ENCODE measurements at regions of chr7 and their contacts with region 1.

Region 1: GRCh38 chr7:151057989-151058780 is 488 bp upstream of the CDK5 start:
- DNase-seq: peak; percentile 98
- ATAC-seq: peak; percentile 80
- H3K4me3 ChIP-seq: peak overlapping the region; percentile 86
- H3K27ac ChIP-seq: peak overlapping the region; percentile 67
- H3K4me1 ChIP-seq: peaks cover 45% of the 10 kb centered on the region
- H3K27me3 ChIP-seq: no peaks in the 10 kb centered on the region
- CTCF ChIP-seq: no peak

Region 2: GRCh38 chr7:150903606-150904005 is 154.6 kb before region 1 on chr7:
- CTCF ChIA-PET with region 1: no interaction called
- POLR2A ChIA-PET with region 1: no interaction called
- intact Hi-C with region 1: no loop called
- DNase-seq: peak; percentile 87
- ATAC-seq: peak; percentile 90
- H3K4me3 ChIP-seq: no peak overlapping the region; the same call in 1 of the 2 replicates
- H3K27ac ChIP-seq: peak overlapping the region; percentile 41
- H3K4me1 ChIP-seq: peaks cover 27% of the 10 kb centered on the region
- H3K27me3 ChIP-seq: peaks cover 4% of the 10 kb centered on the region; the same call in 1 of the 2 replicates
- CTCF ChIP-seq: no peak

Region 3: DNA sequence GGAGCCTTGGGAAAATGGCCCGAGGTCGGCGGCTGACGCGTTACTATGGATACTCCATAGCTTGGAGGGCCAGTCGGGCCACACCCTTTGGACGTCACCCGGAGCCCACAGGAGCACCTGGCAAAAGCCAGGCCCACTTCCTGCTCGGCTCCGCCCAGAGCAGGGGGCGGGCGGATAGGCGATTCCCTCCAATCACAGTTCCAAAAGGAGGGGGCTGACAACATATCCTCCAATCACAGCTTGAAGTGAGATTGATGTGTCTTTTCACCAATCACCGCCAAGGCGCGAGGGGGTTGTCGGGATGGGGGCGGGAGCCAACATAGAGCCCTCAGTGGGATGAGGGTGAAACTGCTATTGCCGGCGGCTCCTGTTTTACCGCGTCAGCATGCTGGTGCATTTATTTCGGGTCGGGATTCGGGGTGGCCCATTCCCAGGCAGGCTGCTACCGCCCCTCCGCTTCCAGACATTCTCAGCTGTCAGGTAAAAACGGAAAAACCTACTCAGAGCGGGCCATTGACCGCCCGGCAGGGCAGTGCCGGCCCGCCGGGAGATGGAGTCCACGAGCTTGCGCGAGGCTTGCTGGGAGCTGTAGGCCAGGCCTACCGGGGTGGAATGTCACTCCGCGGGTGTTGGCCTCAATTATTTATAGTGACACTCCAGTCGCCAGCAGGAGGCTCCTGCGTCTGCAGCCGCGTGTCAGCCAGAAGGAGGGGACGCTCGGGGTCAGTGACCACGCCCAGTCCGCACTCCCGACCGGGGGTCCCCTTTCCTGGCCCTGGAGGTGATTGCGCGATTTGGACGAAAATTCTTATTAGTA is 29.8 kb before region 1 on chr7 and contains the start of gene ABCB8:
- CTCF ChIA-PET with region 1: interaction called, 5 read pairs
- POLR2A ChIA-PET with region 1: no interaction called
- intact Hi-C with region 1: loop called (anchors 1 kb)
- DNase-seq: peak; percentile 99
- ATAC-seq: peak; percentile 87
- H3K4me3 ChIP-seq: peak within 1 kb of the TSS; percentile 75
- H3K27ac ChIP-seq: peak within 1 kb of the TSS; percentile 81
- H3K4me1 ChIP-seq: peaks cover 44% of the 10 kb centered on the region
- H3K27me3 ChIP-seq: no peaks in the 10 kb centered on the region
- CTCF ChIP-seq: peak; percentile 60
- total RNA-seq, gene ABCB8: 58.4 and 95.7 TPM in 2 replicates

Region 4: DNA sequence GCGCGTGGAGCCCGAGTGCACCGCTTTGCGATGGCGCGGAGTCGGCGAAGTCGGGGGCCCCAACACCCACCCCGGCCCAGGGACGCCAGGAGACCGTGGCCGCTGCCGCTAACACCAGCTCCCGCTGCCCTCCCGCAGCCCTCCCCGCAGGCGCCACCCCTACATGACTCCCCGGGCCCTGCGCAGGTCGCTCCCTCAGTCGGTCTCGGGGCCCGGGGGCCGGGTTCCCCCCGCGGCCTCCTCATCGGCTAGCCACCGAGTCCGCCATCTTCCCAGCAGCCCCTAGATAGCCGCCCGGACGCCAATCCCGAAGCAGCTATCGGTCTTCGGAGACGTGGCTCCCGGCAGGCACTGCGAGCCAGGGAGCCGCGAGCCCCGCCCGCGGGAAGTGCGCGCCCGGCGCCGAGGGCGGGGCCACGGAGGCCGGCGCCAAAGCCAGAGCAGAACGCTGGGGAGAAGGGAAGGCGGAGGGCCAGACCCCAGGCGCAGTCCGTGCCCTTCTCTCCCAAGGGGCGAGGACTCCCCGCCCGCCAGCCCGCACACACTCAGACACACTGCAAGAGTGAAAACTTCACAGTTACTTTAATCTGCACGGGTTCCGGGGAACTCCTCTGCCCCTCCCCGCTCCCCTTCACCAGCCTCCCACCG is 22.5 kb after region 1 on chr7 and contains the start of gene FASTK:
- CTCF ChIA-PET with region 1: no interaction called
- POLR2A ChIA-PET with region 1: interaction called, 23 read pairs
- intact Hi-C with region 1: loop called (anchors 1 kb)
- DNase-seq: peak; percentile 94
- ATAC-seq: peak; percentile 62
- H3K4me3 ChIP-seq: peak within 1 kb of the TSS; percentile 91
- H3K27ac ChIP-seq: peak within 1 kb of the TSS; percentile 65
- H3K4me1 ChIP-seq: peaks cover 39% of the 10 kb centered on the region
- H3K27me3 ChIP-seq: no peaks in the 10 kb centered on the region
- CTCF ChIP-seq: no peak
- total RNA-seq, gene FASTK: 163 and 211 TPM in 2 replicates

Region 5: DNA sequence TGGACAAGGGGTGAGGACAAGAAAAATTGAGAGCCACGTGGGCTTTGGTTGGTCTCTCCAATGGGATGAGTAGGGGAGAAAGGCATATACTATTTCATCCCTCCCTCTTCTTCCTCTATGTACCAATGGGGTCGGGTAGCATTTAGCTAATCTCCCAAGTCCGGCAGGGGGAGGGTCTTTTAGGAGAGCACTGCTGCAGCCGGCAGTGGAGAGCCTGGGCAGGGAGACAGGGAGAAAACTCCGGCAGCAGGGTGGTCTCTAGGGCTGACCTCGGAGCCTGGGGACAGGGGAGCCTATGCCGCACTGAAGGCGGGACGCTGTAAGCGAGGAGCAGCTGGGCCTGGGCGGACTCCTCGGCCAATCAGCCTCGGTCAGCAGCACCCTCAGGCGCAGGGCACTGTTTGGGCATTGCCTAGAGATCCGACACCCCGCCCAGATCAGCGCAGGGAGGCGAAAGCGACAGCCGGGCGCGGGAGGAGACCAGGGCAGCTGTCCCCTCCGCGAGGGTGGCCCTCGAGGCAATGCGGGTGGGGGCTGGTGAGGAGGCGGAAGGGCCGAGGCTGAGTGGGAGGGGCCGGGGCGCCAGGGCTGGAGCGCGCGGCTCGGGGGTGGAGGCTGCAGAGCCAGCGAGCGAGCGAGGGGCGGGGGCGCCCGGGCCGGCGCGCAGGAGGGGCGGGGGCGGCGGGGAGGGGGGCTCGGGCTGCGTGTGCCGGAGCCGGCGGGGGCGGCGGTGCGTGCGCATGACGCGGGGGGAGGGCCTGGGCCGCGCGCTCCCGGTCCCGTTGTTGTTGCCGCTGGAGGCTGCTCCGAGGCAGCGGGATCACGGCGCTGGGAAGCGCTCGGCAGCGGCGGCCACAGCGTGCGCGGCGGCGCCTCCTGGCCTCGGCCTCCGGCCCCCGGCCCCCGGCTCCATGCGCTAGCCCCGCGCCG is 27.8 kb after region 1 on chr7 and contains the start of gene AGAP3:
- CTCF ChIA-PET with region 1: no interaction called
- POLR2A ChIA-PET with region 1: interaction called, 23 read pairs
- intact Hi-C with region 1: loop called (anchors 1 kb)
- DNase-seq: peak; percentile 71
- ATAC-seq: peak; percentile 44
- H3K4me3 ChIP-seq: peak within 1 kb of the TSS; percentile 99
- H3K27ac ChIP-seq: peak within 1 kb of the TSS; percentile 42
- H3K4me1 ChIP-seq: peaks cover 54% of the 10 kb centered on the region
- H3K27me3 ChIP-seq: no peaks in the 10 kb centered on the region
- CTCF ChIP-seq: no peak
- total RNA-seq, gene AGAP3: 53.5 and 88.2 TPM in 2 replicates

Region 6: DNA sequence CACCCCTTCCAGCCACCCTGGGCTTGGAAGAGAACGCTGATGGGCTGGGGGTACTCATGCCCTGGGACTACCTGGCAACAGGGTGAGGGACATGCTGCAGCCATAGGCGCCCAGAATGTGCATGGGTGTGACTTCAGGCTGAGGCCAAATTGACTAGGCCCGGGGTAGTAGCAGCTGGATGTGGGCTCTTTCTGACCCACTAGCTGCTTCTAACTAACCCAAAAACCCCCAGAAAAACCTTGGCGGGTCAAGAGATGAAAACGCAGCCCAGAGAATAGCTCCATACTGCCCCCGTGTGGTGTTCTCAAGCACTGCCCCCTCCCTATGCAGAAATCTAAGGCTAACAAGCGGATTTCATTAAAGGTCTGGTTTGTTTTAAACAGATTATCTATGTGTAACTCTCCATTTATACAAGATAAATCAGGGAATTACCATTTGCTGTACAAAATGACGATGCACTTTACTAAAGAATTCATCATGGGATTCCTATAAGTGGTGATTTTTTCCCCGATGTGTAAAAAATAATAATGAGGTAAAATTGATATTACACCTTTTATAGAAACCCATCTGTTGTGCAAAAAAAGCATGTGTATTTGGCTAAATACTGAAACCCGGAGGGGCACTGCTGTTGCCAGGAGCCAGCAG is 186.1 kb after region 1 on chr7:
- CTCF ChIA-PET with region 1: no interaction called
- POLR2A ChIA-PET with region 1: no interaction called
- intact Hi-C with region 1: no loop called
- DNase-seq: peak; percentile 41
- ATAC-seq: no peak
- H3K4me3 ChIP-seq: no peak overlapping the region
- H3K27ac ChIP-seq: no peak overlapping the region
- H3K4me1 ChIP-seq: peaks cover 4% of the 10 kb centered on the region
- H3K27me3 ChIP-seq: no peaks in the 10 kb centered on the region
- CTCF ChIP-seq: peak; percentile 86

Measured in PC-3 (cell line).